ENCODE measurements at regions of chr7 and their contacts with region 1.

Region 1: GRCh38 chr7:41705109-41705901 is 2.4 kb upstream of the INHBA start:
- H3K4me3 Mint-ChIP-seq: peak overlapping the region; percentile 86
- H3K27ac Mint-ChIP-seq: peak overlapping the region; percentile 79
- H3K4me1 Mint-ChIP-seq: peaks cover 47% of the 10 kb centered on the region
- H3K27me3 Mint-ChIP-seq: peaks cover 20% of the 10 kb centered on the region

Region 2: GRCh38 chr7:41005381-41005911 is 699.9 kb before region 1 on chr7:
- intact Hi-C with region 1: loop called (anchors 5 kb)
- H3K4me3 Mint-ChIP-seq: no peak overlapping the region
- H3K27ac Mint-ChIP-seq: no peak overlapping the region
- H3K4me1 Mint-ChIP-seq: peaks cover 33% of the 10 kb centered on the region
- H3K27me3 Mint-ChIP-seq: no peaks in the 10 kb centered on the region

Region 3: DNA sequence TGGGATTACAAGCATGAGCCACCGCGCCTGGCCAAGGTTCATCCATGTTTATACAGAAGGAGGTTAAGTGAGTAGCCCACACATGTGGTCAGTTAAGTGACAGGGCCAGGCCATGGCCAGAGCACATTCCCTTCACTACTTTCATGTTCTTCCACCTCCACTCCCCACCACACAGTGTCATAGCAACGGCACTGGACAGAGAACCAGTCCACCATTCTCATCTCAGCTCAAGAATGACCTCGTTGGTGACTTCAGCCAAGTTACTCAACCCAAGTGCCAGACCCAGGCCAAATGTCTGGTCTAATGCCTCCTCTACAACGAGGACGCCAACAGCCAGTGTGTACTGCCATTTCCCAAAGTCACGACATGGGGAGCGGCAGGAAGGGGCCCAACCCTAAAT is 64.8 kb before region 1 on chr7:
- intact Hi-C with region 1: loop called (anchors 10 kb)
- H3K4me3 Mint-ChIP-seq: no peak overlapping the region
- H3K27ac Mint-ChIP-seq: no peak overlapping the region
- H3K4me1 Mint-ChIP-seq: no peaks in the 10 kb centered on the region
- H3K27me3 Mint-ChIP-seq: no peaks in the 10 kb centered on the region